Gastrocnemius medialis (tissue), 4 donors: ENCODE measurements at regions of chrX and their contacts with region 1.

Region 1: GRCh38 chrX:136028251-136028984 is 43.2 kb downstream of the SLC9A6 start:
- DNase-seq: no peak
- ATAC-seq: peak; percentile 64 to 72
- H3K4me3 ChIP-seq: no peak overlapping the region
- H3K27ac ChIP-seq: peak overlapping the region in 1 of 4 donors; percentile 70
- H3K4me1 ChIP-seq: peaks cover 9 to 19% of the 10 kb centered on the region in 2 donors
- H3K27me3 ChIP-seq: no peaks in the 10 kb centered on the region
- CTCF ChIP-seq: peak; percentile 37 to 70 (median 47)
- POLR2A ChIP-seq: no peak

Region 2: GRCh38 chrX:136055651-136056221 is 27.3 kb after region 1 on chrX:
- in situ Hi-C with region 1: no loop called
- intact Hi-C with region 1: loop called (anchors 2 kb)
- DNase-seq: peak; percentile 47 to 63
- ATAC-seq: peak; percentile 97 to 98
- H3K4me3 ChIP-seq: peak overlapping the region in 3 of 4 donors; percentile 20 to 35 (median 22)
- H3K27ac ChIP-seq: peak overlapping the region; percentile 70 to 86 (median 82)
- H3K4me1 ChIP-seq: peaks cover 8 to 15% of the 10 kb centered on the region in 2 donors
- H3K27me3 ChIP-seq: no peaks in the 10 kb centered on the region
- CTCF ChIP-seq: no peak
- POLR2A ChIP-seq: peak in 1 of 2 donors; percentile 45

Region 3: GRCh38 chrX:136147315-136147901 is 119.0 kb after region 1 on chrX and contains the start of gene FHL1:
- in situ Hi-C with region 1: loop called in 1 of 4 experiments (anchors 25 kb)
- intact Hi-C with region 1: loop called (anchors 1 kb)
- DNase-seq: peak in 1 of 2 donors; percentile 30
- ATAC-seq: peak; percentile 72 to 82
- H3K4me3 ChIP-seq: peak within 1 kb of the TSS; percentile 66 to 75 (median 70)
- H3K27ac ChIP-seq: peak within 1 kb of the TSS; percentile 73 to 78 (median 74)
- H3K4me1 ChIP-seq: no peaks in the 10 kb centered on the region
- H3K27me3 ChIP-seq: peaks cover 0 to 4% (median 0%) of the 10 kb centered on the region in 3 donors
- CTCF ChIP-seq: no peak
- POLR2A ChIP-seq: peak; percentile 45 to 63
- total RNA-seq, gene FHL1: 2,023 to 8,069 (median 7,102) TPM

Region 4: DNA sequence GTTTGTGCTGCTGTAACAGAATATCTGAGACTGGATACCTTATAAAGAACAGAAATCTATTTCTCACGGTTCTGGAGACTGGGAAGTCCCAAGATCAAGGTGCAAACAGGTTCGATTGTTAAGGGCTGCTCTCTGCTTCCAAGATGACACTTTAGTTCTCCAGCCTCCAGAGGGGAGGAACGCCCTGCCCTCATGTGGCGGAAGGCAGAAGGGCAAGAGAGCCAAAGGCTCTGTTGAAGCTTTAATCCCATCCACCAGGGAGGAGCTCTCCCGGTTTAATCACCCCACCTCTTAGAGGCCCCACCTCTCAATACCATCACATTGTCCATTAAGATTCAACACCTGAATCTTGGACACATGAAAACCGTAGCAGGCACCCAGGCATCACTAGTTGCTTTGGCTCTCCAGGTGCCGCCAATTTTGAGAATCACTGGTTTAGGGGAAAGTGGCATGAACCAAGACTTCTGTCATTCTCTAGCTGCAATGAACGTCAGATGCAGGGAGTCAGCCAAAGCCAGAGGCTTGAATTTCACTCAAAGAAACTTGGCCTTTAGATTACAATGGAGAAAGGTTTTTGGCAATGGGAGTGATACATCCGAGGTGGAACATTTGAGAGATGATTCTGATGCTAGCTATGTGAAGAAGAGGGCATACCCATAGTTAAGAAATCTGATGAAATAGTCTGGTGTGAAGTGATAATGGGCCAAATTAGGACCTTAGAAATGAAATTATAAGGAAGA is 134.6 kb after region 1 on chrX:
- in situ Hi-C with region 1: loop called (anchors 5 to 25 kb)
- intact Hi-C with region 1: loop called (anchors 1 kb)
- DNase-seq: peak in 1 of 2 donors; percentile 51
- ATAC-seq: peak; percentile 61 to 79
- H3K4me3 ChIP-seq: no peak overlapping the region
- H3K27ac ChIP-seq: peak overlapping the region; percentile 10 to 35 (median 16)
- H3K4me1 ChIP-seq: peaks cover 6 to 8% of the 10 kb centered on the region in 2 donors
- H3K27me3 ChIP-seq: no peaks in the 10 kb centered on the region
- CTCF ChIP-seq: peak; percentile 51 to 75 (median 74)
- POLR2A ChIP-seq: no peak

Region 5: GRCh38 chrX:136209016-136209738 is 180.8 kb after region 1 on chrX:
- in situ Hi-C with region 1: no loop called
- intact Hi-C with region 1: loop called (anchors 2 kb)
- DNase-seq: peak in 1 of 2 donors; percentile 62
- ATAC-seq: peak in 1 of 2 donors; percentile 17
- H3K4me3 ChIP-seq: no peak overlapping the region
- H3K27ac ChIP-seq: peak overlapping the region; percentile 68 to 92 (median 78)
- H3K4me1 ChIP-seq: peaks cover 2 to 24% of the 10 kb centered on the region in 2 donors
- H3K27me3 ChIP-seq: no peaks in the 10 kb centered on the region
- CTCF ChIP-seq: peak; percentile 45 to 66 (median 58)
- POLR2A ChIP-seq: no peak